H1 (cell line): ENCODE measurements at regions of chr2 and their contacts with region 1.

Region 1: DNA sequence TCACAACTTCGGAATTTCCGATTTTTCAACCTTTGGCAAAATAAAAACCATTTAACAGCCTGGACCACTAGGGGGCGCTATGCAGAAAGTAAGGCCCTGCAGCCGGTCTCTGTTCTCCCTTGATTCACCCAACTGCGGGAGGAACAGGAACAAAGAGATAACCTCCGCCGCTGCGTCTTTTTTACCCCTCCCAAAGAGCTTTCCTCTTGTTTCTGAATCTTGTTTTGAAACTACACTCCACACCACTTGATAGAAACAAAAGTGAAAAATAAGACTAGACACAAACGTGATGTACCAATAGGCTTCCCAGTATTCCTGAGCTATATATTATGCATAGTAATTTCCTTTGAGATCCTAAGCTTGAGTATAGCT is 231.2 kb downstream of the MYO3B start:
- DNase-seq: peak; percentile 19 to 86
- H3K4me3 ChIP-seq: peak overlapping the region in 1 of 4 experiments; percentile 16; a peak in 1 of 8 replicates
- H3K27ac ChIP-seq: no peak overlapping the region
- H3K4me1 ChIP-seq: no peaks in the 10 kb centered on the region
- H3K27me3 ChIP-seq: no peaks in the 10 kb centered on the region
- CTCF ChIP-seq: peak; percentile 47 to 75 (median 69)
- EP300 ChIP-seq: no peak
- POLR2A ChIP-seq: no peak
- RAD21 ChIP-seq: peak; percentile 73 to 80

Region 2: GRCh38 chr2:170047331-170048065 is 361.7 kb before region 1 on chr2:
- CTCF ChIA-PET with region 1: no interaction called
- POLR2A ChIA-PET with region 1: no interaction called
- DNase-seq: no peak
- H3K4me3 ChIP-seq: no peak overlapping the region
- H3K27ac ChIP-seq: no peak overlapping the region
- H3K4me1 ChIP-seq: no peaks in the 10 kb centered on the region
- H3K27me3 ChIP-seq: no peaks in the 10 kb centered on the region
- CTCF ChIP-seq: no peak
- EP300 ChIP-seq: no peak
- POLR2A ChIP-seq: no peak
- RAD21 ChIP-seq: no peak

Region 3: DNA sequence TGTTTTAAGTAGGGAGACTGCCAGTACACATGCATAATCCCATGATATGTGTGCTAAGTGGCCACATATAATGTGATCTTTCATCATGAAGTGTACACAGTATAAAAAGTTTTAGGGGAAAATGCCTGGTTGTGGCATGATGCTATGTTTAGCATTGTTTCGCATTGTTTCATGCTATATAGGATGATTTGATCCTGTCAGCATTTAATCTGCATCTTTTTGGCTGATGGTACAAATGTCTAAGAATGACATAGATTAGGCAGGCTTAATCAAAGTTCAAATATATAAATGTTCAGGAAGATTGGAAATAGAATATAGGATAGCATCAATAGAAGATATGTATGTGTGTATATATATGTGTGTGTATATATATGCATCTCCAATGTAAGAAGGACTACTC is 147.6 kb before region 1 on chr2:
- CTCF ChIA-PET with region 1: no interaction called
- POLR2A ChIA-PET with region 1: no interaction called
- DNase-seq: no peak
- H3K4me3 ChIP-seq: no peak overlapping the region
- H3K27ac ChIP-seq: no peak overlapping the region
- H3K4me1 ChIP-seq: no peaks in the 10 kb centered on the region
- H3K27me3 ChIP-seq: no peaks in the 10 kb centered on the region
- CTCF ChIP-seq: no peak
- EP300 ChIP-seq: no peak
- POLR2A ChIP-seq: no peak
- RAD21 ChIP-seq: no peak

Region 4: GRCh38 chr2:170377500-170378207 is 31.5 kb before region 1 on chr2:
- CTCF ChIA-PET with region 1: interaction called, 21 read pairs
- POLR2A ChIA-PET with region 1: no interaction called
- DNase-seq: no peak
- H3K4me3 ChIP-seq: no peak overlapping the region
- H3K27ac ChIP-seq: no peak overlapping the region
- H3K4me1 ChIP-seq: 0 out of 7 replicates have a peak, but pooled peaks cover 0 to 2% (median 0%) of the 10 kb centered on the region in 4 experiments
- H3K27me3 ChIP-seq: no peaks in the 10 kb centered on the region; a peak in 2 of 7 replicates
- CTCF ChIP-seq: no peak
- EP300 ChIP-seq: no peak
- POLR2A ChIP-seq: no peak
- RAD21 ChIP-seq: no peak

Region 5: GRCh38 chr2:170396799-170397459 is 12.2 kb before region 1 on chr2:
- CTCF ChIA-PET with region 1: interaction called, 26 read pairs
- POLR2A ChIA-PET with region 1: no interaction called
- DNase-seq: no peak
- H3K4me3 ChIP-seq: no peak overlapping the region
- H3K27ac ChIP-seq: no peak overlapping the region
- H3K4me1 ChIP-seq: no peaks in the 10 kb centered on the region
- H3K27me3 ChIP-seq: no peaks in the 10 kb centered on the region
- CTCF ChIP-seq: peak in 2 of 3 experiments; percentile 5 to 22; a peak in 2 of 4 replicates
- EP300 ChIP-seq: no peak
- POLR2A ChIP-seq: no peak
- RAD21 ChIP-seq: peak; percentile 40 to 48

Region 6: DNA sequence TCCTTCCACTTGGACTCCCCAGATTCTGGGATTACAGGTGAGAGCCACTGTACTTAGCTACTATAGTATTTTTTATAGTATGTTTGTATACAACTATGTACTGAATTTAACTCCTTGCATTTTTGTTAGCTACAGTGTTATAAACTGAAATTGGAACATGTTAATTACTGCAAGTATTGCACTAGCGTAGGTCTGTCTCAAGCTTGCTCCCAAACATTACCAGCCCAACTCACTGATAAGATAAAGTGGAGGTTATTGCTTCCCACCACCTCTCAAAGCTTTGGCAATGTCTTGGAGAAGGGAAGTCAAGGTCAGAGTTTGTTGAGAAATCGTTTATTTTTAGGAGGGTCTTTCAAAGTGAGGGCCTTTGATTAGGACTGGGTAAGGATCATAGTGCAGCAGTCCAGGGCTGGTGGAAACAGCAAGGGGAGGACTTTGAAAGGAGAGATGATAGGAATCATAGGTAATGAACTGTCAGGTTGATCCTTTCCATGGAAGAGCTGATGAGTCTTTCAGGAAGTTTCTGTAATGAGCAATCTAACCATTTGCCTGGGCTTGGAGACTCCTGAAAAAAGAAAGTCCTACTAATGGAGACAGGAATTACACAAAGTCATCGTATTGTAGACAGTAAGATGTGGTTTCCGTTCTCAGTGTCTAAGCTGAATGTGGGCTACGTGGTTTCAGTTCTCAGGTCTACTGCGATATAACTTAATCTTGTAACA is 25.9 kb after region 1 on chr2:
- CTCF ChIA-PET with region 1: interaction called, 10 read pairs
- POLR2A ChIA-PET with region 1: no interaction called
- DNase-seq: no peak
- H3K4me3 ChIP-seq: no peak overlapping the region
- H3K27ac ChIP-seq: no peak overlapping the region
- H3K4me1 ChIP-seq: peaks cover 5 to 17% (median 9%) of the 10 kb centered on the region in 4 experiments; a peak in 4 of 7 replicates
- H3K27me3 ChIP-seq: peaks cover 0 to 13% (median 3%) of the 10 kb centered on the region in 4 experiments; a peak in 3 of 7 replicates
- CTCF ChIP-seq: no peak
- EP300 ChIP-seq: no peak
- POLR2A ChIP-seq: no peak
- RAD21 ChIP-seq: no peak